AG04449 (cell line): ENCODE measurements at regions of chr13 and their contacts with region 1.

Region 1: GRCh38 chr13:23466144-23467002 is 32.9 kb upstream of the SACS start:
- DNase-seq: no peak
- H3K4me3 ChIP-seq: peak overlapping the region; percentile 56
- CTCF ChIP-seq: peak; percentile 57

Region 2: GRCh38 chr13:23477101-23477500 is 10.7 kb after region 1 on chr13:
- CTCF ChIA-PET with region 1: interaction called, 13 read pairs
- POLR2A ChIA-PET with region 1: no interaction called
- DNase-seq: no peak
- H3K4me3 ChIP-seq: no peak overlapping the region
- CTCF ChIP-seq: no peak

Region 3: DNA sequence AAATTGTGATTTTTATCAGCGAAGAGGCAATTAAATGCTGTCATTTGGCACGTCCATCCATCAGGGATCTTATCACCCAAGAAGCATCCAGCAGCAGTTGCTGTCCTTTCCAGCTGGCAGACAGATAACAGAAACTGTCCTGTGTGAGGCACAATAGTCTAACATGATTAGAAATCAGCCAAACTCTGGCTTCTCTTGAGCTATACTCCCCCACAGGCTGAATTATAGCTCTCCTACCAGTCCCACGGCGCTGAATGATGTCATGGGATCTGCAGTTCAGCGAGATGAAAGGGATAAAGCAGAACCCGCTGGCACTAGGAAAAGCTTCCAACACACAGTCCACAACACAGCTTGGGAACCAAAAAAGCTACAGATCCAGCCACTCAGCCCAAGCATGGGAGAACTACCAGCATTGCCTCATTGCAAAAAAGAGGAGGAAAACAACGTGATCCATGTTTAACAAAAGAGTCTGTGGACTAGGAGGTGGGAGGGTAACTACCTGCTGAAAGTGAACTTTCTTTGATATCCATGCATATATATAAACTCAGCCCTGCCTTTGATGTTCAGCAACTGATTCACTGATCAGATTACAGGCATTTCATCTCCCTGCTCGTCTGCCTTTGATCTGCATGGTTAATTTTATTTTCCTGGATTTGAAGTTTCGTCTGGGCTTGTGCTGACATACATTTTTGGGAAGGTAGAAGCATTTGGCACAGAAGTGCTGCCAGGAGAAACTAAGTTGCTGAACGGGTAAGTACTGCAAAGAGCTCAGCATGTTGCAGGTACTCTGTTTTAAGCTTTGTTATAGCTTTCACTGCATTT is 103.9 kb after region 1 on chr13 and contains the start of gene TNFRSF19:
- CTCF ChIA-PET with region 1: interaction called, 65 read pairs
- POLR2A ChIA-PET with region 1: interaction called, 3 read pairs
- DNase-seq: peak; percentile 64
- H3K4me3 ChIP-seq: peak within 1 kb of the TSS; percentile 63
- CTCF ChIP-seq: no peak

Region 4: GRCh38 chr13:23871616-23872220 is 405.3 kb after region 1 on chr13:
- CTCF ChIA-PET with region 1: interaction called, 36 read pairs
- POLR2A ChIA-PET with region 1: no interaction called
- DNase-seq: no peak
- H3K4me3 ChIP-seq: no peak overlapping the region
- CTCF ChIP-seq: no peak

Region 5: GRCh38 chr13:23899555-23899954 is 433.2 kb after region 1 on chr13:
- CTCF ChIA-PET with region 1: interaction called, 52 read pairs
- POLR2A ChIA-PET with region 1: no interaction called
- DNase-seq: no peak
- H3K4me3 ChIP-seq: no peak overlapping the region
- CTCF ChIP-seq: peak; percentile 33